Caco-2 (cell line): ENCODE measurements at regions of chr21 and their contacts with region 1.

Region 1: GRCh38 chr21:43585924-43586424 is 73.3 kb downstream of the HSF2BP start:
- DNase-seq: peak; percentile 79 to 88
- H3K4me3 ChIP-seq: no peak overlapping the region
- H3K4me3 Mint-ChIP-seq: peak overlapping the region; percentile 69
- H3K27ac Mint-ChIP-seq: peak overlapping the region; percentile 97
- H3K4me1 ChIP-seq: peaks cover 59% of the 10 kb centered on the region
- H3K4me1 Mint-ChIP-seq: peaks cover 41% of the 10 kb centered on the region
- H3K27me3 ChIP-seq: no peaks in the 10 kb centered on the region
- H3K27me3 Mint-ChIP-seq: no peaks in the 10 kb centered on the region
- CTCF ChIP-seq: no peak

Region 2: DNA sequence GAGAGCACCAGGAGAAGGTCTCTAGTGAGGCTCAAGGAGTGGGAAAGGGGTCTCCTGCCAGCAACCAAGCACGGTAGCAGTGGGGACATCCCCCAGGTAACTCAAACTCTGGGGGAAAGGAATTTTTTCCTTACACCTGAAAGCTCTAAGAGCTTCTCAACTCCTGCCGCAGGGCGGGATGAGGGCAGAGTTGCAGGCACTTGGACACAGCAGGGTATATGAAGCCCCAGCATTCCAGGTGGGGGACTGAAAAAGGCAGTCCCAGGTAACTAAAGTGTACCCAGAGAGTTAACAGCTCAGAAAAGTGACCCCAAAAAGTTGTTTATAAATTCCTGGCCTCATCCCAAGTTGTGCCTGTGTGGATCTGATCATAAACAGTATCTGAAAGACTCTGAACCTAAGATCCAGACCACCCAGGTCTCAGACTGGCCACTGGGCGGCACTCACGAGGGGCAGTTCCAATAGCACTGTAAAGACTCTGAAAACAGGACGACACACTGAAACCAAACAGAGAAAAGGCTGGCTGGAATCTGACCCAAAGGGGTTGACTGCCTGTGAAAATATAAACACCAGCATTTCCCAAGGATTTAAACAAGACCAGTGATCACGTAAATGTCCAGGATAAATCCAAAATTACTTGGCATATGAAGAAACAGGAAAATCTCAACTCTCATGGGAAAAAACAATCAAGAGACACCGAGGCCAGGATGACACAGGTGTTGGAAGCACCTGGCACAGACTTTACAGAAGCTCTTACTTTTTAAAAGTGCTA is 25.8 kb after region 1 on chr21:
- CTCF ChIA-PET with region 1: interaction called, 7 read pairs
- POLR2A ChIA-PET with region 1: no interaction called
- intact Hi-C with region 1: loop called (anchors 1 kb)
- DNase-seq: peak; percentile 77 to 82
- H3K4me3 ChIP-seq: no peak overlapping the region
- H3K4me3 Mint-ChIP-seq: peak overlapping the region; percentile 38
- H3K27ac Mint-ChIP-seq: peak overlapping the region; percentile 95
- H3K4me1 ChIP-seq: peaks cover 58% of the 10 kb centered on the region
- H3K4me1 Mint-ChIP-seq: peaks cover 22% of the 10 kb centered on the region
- H3K27me3 ChIP-seq: no peaks in the 10 kb centered on the region
- H3K27me3 Mint-ChIP-seq: no peaks in the 10 kb centered on the region
- CTCF ChIP-seq: peak; percentile 72 to 87